ENCODE measurements at regions of chr6 and their contacts with region 1.

Region 1: DNA sequence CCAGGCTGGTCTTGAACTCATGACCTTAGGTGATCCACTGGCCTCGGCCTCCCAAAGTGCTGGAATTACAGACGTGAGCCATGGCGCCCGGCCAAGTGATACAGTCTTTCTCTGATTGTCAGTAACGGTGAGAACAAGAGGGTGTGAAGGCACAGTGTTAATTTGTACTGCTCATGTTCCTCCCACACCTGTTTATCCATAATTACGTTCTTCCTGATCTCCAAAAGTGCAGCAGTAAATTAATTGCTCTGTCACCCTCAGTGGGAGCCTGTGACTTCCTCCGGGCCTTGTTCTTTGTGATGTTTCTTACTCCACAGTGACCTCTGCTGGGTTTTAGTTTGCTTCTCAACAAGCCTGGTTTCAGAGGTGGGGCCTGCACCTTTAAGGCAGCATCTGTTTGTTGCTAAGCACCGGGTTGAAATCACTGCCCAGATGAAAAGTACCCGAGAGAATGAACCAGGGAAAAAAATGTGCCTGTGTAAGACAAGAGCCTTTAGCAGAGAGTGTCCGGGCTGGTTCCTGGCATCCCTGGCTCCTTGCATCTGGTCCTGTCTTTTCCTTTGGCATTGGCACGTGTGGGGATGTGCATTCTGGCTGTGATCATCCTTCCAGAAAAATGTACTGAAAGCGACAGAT is 89.1 kb upstream of the CLDN20 start:
- DNase-seq: peak in 1 of 2 donors; percentile 80
- H3K4me3 ChIP-seq: no peak overlapping the region
- H3K27ac ChIP-seq: no peak overlapping the region
- H3K4me1 ChIP-seq: peaks cover 6 to 18% of the 10 kb centered on the region in 2 donors
- H3K27me3 ChIP-seq: no peaks in the 10 kb centered on the region
- CTCF ChIP-seq: peak; percentile 59 to 80 (median 63)

Region 2: DNA sequence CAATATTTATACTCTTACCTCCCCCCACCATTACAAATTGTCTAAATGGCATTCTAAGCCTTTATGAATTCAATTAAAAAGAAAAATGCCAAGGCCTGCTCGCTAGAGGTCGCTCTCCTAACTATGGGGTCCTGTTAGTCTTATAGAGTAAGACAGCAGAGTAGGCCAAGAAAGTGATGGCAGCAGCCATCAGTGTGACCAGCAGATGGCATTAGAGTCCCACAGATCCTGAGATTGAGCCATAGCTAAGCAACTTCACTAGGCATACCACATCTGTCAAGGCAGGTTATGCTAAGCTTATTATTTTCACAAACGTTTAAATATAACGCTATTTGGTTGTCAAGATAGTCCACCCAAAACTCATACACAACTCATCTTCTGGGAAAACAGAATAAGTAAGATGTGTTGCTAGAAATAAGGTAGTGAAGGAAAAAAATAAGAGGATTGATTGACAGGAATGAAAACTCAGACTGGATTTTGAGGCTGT is 499.0 kb before region 1 on chr6:
- intact Hi-C with region 1: loop called (anchors 5 kb)
- DNase-seq: peak; percentile 68 to 95
- H3K4me3 ChIP-seq: no peak overlapping the region
- H3K27ac ChIP-seq: no peak overlapping the region
- H3K4me1 ChIP-seq: no peaks in the 10 kb centered on the region
- H3K27me3 ChIP-seq: no peaks in the 10 kb centered on the region
- CTCF ChIP-seq: peak; percentile 97 to 99 (median 97)

Region 3: GRCh38 chr6:154868143-154868594 is 306.5 kb before region 1 on chr6:
- intact Hi-C with region 1: loop called (anchors 2 kb)
- DNase-seq: no peak
- H3K4me3 ChIP-seq: no peak overlapping the region
- H3K27ac ChIP-seq: no peak overlapping the region
- H3K4me1 ChIP-seq: no peaks in the 10 kb centered on the region
- H3K27me3 ChIP-seq: no peaks in the 10 kb centered on the region
- CTCF ChIP-seq: peak; percentile 39 to 73 (median 72)

Region 4: GRCh38 chr6:154995284-154996015 is 179.2 kb before region 1 on chr6 and contains the start of gene TIAM2:
- intact Hi-C with region 1: loop called (anchors 2 kb)
- DNase-seq: no peak
- H3K4me3 ChIP-seq: peak within 1 kb of the TSS; percentile 61 to 78
- H3K27ac ChIP-seq: peak within 1 kb of the TSS; percentile 62 to 78
- H3K4me1 ChIP-seq: no peaks in the 10 kb centered on the region
- H3K27me3 ChIP-seq: no peaks in the 10 kb centered on the region
- CTCF ChIP-seq: no peak
- total RNA-seq, gene TIAM2: 3.7 TPM

Region 5: GRCh38 chr6:155079985-155080452 is 94.7 kb before region 1 on chr6:
- intact Hi-C with region 1: loop called (anchors 5 kb)
- DNase-seq: no peak
- H3K4me3 ChIP-seq: no peak overlapping the region
- H3K27ac ChIP-seq: no peak overlapping the region
- H3K4me1 ChIP-seq: peaks cover 2 to 20% of the 10 kb centered on the region in 2 donors
- H3K27me3 ChIP-seq: no peaks in the 10 kb centered on the region
- CTCF ChIP-seq: no peak

Region 6: GRCh38 chr6:155188707-155189496 is 14.2 kb after region 1 on chr6:
- intact Hi-C with region 1: no loop called
- DNase-seq: no peak
- H3K4me3 ChIP-seq: peak overlapping the region in 1 of 2 donors; percentile 17
- H3K27ac ChIP-seq: peak overlapping the region; percentile 17 to 36
- H3K4me1 ChIP-seq: peaks cover 0 to 19% of the 10 kb centered on the region in 2 donors
- H3K27me3 ChIP-seq: no peaks in the 10 kb centered on the region
- CTCF ChIP-seq: no peak

Region 7: GRCh38 chr6:155314092-155314772 is 139.5 kb after region 1 on chr6 and contains the start of gene TFB1M:
- intact Hi-C with region 1: loop called (anchors 5 kb)
- DNase-seq: peak; percentile 94 to 99
- H3K4me3 ChIP-seq: peak within 1 kb of the TSS; percentile 77 to 90
- H3K27ac ChIP-seq: peak within 1 kb of the TSS; percentile 79 to 84
- H3K4me1 ChIP-seq: peaks cover 0 to 3% of the 10 kb centered on the region in 2 donors
- H3K27me3 ChIP-seq: no peaks in the 10 kb centered on the region
- CTCF ChIP-seq: no peak
- total RNA-seq, gene TFB1M: 2.9 TPM

Measured in ascending aorta (tissue), 2 donors.